Endothelial cell of umbilical vein (primary cell): ENCODE measurements at regions of chr1 and their contacts with region 1.

Region 1: DNA sequence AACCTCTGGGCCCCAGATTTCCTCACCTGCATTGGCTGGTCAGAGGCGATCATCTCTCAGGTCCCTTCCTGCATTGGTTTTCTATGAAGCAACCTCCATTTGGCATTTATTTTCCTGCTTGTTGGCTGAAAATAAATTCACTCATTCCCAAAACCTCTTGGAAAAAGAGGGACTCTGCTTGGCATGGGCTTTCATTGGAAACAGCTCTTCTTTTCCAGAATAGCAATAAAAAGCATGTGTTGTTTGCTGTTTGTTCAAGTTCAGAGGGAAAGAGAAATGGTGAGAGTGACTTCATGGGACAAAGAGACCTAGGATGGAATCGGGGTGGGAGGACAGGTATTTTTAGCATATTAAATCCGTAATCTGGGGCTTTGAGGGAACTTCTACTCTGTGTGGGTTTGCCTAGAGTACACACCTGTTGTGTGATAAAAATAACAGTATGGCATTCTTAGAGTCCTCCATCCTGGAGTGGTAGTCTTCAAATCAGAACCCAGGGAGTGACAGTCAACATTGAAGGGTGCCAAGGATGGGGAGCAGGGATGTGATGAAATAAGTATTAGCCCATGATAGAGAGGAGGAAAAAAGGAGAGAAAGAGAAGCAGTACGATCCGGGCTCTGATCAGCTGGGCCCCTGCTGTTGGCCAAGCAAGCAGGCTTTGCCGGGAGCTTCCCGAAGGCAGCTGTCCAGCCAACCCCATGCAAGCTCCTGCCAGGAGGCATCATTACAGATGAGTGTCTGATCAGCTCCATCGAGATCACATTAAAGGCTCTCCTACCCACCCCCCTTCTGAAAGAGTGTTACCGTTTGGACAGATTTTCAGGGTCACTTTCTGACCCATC is 131.9 kb upstream of the NFIA start:
- DNase-seq: no peak
- H3K4me3 ChIP-seq: no peak overlapping the region
- H3K27ac ChIP-seq: no peak overlapping the region
- H3K4me1 ChIP-seq: peaks cover 29% of the 10 kb centered on the region
- H3K27me3 ChIP-seq: no peaks in the 10 kb centered on the region
- CTCF ChIP-seq: no peak
- POLR2A ChIP-seq: no peak

Region 2: DNA sequence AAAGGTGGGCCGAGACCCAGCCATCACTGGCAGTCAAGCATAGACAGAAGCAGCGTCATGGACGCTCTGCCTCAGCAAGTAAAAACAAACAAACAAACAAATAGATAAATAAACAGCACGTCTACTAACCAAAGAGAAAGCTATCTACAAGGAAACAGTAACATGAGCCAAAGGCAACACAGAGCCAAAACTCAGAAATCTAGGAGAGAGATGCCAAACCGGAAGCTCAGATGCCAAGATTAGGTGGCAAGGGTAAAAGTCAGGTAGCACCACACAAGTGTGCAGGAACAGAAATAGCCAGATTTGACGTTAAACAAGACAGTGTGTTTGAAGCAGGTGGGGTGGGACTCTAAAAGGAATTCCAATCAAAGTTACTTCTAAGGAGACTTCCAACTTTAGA is 316.3 kb before region 1 on chr1:
- CTCF ChIA-PET with region 1: no interaction called
- POLR2A ChIA-PET with region 1: no interaction called
- dilution Hi-C with region 1: no loop called
- intact Hi-C with region 1: no loop called
- DNase-seq: no peak
- H3K4me3 ChIP-seq: no peak overlapping the region
- H3K27ac ChIP-seq: no peak overlapping the region
- H3K4me1 ChIP-seq: no peaks in the 10 kb centered on the region
- H3K27me3 ChIP-seq: no peaks in the 10 kb centered on the region
- CTCF ChIP-seq: no peak
- POLR2A ChIP-seq: no peak

Region 3: GRCh38 chr1:60937720-60938119 is 12.7 kb before region 1 on chr1:
- CTCF ChIA-PET with region 1: interaction called, 3 read pairs
- POLR2A ChIA-PET with region 1: no interaction called
- dilution Hi-C with region 1: no loop called
- intact Hi-C with region 1: loop called (anchors 1 kb)
- DNase-seq: no peak
- H3K4me3 ChIP-seq: no peak overlapping the region
- H3K27ac ChIP-seq: no peak overlapping the region
- H3K4me1 ChIP-seq: peaks cover 16% of the 10 kb centered on the region
- H3K27me3 ChIP-seq: no peaks in the 10 kb centered on the region
- CTCF ChIP-seq: no peak
- POLR2A ChIP-seq: no peak